Mucosa of descending colon (tissue), 3 donors: ENCODE measurements at regions of chr17 and their contacts with region 1.

Region 1: GRCh38 chr17:40014375-40014980 is 762 bp upstream of the CSF3 start:
- DNase-seq: no peak
- ATAC-seq: peak; percentile 18
- H3K4me3 ChIP-seq: no peak overlapping the region
- H3K4me1 ChIP-seq: peaks cover 28% of the 10 kb centered on the region
- CTCF ChIP-seq: no peak

Region 2: GRCh38 chr17:40168262-40168832 is 153.9 kb after region 1 on chr17:
- intact Hi-C with region 1: loop called in 1 of 2 experiments (anchors 5 kb)
- DNase-seq: peak in 1 of 3 donors; percentile 52
- ATAC-seq: peak; percentile 90
- H3K4me3 ChIP-seq: no peak overlapping the region
- H3K4me1 ChIP-seq: peaks cover 5% of the 10 kb centered on the region
- CTCF ChIP-seq: peak; percentile 66